Esophagus muscularis mucosa (tissue), 4 donors: ENCODE measurements at regions of chr5 and their contacts with region 1.

Region 1: DNA sequence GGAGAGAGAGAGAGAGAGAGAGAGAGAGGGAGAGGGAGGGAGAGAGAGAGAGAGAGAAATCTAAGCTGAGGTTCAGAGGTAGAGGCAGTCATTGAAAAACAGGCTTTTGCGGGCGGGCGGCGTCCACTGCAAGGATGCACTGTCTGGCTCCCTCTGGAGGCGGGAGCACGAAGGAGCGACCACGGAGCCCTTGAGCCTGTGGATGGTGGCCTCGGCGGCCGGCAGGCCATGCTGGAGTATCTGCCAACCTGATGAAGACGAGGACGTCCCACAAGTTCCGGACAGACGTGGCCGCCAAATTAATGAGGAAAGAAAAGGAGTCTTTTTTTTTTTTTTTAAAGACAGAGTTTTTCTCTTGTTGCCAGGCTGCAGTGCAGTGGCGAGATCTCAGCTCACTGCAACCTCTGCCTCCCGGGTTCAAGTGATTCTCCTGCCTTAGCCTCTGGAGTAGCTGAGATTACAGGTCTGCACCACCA is 2.2 kb upstream of the CCDC125 start:
- DNase-seq: peak; percentile 93
- H3K4me3 ChIP-seq: peak overlapping the region in 3 of 4 donors; percentile 18 to 24 (median 24)
- H3K27ac ChIP-seq: peak overlapping the region in 3 of 4 donors; percentile 35 to 48 (median 39)
- H3K4me1 ChIP-seq: peaks cover 15 to 26% (median 21%) of the 10 kb centered on the region in 4 donors
- H3K27me3 ChIP-seq: no peaks in the 10 kb centered on the region
- CTCF ChIP-seq: peak; percentile 60 to 86 (median 71)
- EP300 ChIP-seq: no peak
- POLR2A ChIP-seq: no peak

Region 2: GRCh38 chr5:69042915-69043658 is 291.7 kb before region 1 on chr5:
- intact Hi-C with region 1: loop called (anchors 5 kb)
- DNase-seq: peak; percentile 93
- H3K4me3 ChIP-seq: peak overlapping the region; percentile 53 to 61 (median 56)
- H3K27ac ChIP-seq: peak overlapping the region; percentile 42 to 80 (median 72)
- H3K4me1 ChIP-seq: peaks cover 0 to 15% (median 4%) of the 10 kb centered on the region in 4 donors
- H3K27me3 ChIP-seq: no peaks in the 10 kb centered on the region
- CTCF ChIP-seq: peak; percentile 88
- EP300 ChIP-seq: no peak
- POLR2A ChIP-seq: no peak

Region 3: GRCh38 chr5:69093771-69094482 is 240.9 kb before region 1 on chr5 and contains the start of gene SLC30A5:
- intact Hi-C with region 1: loop called (anchors 5 kb)
- DNase-seq: peak; percentile 99
- H3K4me3 ChIP-seq: peak within 1 kb of the TSS; percentile 72 to 95 (median 86)
- H3K27ac ChIP-seq: peak within 1 kb of the TSS; percentile 94 to 97 (median 96)
- H3K4me1 ChIP-seq: peaks cover 13 to 30% (median 27%) of the 10 kb centered on the region in 4 donors
- H3K27me3 ChIP-seq: no peaks in the 10 kb centered on the region
- CTCF ChIP-seq: peak; percentile 90 to 96 (median 91)
- EP300 ChIP-seq: no peak
- POLR2A ChIP-seq: no peak
- total RNA-seq, gene SLC30A5: 29.2 to 35.1 (median 32.5) TPM

Region 4: DNA sequence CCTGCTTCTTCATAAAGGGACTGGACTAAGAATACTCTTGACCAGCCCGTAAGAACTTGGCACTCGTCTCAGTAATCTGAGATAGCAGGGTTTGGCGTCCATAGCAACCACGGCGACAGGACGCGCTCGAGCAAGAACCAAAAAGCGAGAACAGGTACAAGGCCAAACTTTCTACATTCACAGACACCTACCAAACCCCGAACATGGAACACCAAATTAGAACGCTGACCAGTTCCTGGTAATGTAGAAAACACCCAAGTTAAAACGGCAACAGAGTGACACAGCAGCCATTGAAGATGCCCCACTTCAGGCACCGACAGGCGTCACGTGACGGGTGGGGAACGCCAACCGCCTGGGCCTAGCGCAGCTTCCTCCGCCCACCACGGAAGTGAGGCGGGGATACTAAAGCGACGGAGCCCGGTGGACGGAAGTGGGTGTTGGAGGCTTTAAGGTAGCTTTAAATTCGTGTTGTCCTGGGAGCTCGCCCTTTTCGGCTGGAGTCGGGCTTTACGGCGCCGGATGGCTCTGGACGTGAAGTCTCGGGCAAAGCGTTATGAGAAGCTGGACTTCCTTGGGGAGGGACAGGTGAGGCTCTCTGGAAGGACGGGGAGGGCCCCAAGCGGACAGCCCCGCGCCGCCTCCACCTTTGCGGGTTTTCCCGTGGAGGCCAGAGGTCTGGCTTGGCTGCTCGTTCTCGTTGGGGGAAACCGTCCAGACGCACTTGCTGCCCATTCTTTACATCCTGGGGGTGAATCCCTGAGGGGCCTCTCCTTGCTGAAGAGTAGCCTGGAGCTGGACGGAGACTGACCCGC is 100.2 kb before region 1 on chr5 and contains the start of gene CDK7:
- intact Hi-C with region 1: loop called (anchors 10 kb)
- DNase-seq: peak; percentile 98
- H3K4me3 ChIP-seq: peak within 1 kb of the TSS; percentile 70 to 96 (median 76)
- H3K27ac ChIP-seq: peak within 1 kb of the TSS; percentile 77 to 88 (median 84)
- H3K4me1 ChIP-seq: peaks cover 15 to 48% (median 41%) of the 10 kb centered on the region in 4 donors
- H3K27me3 ChIP-seq: no peaks in the 10 kb centered on the region
- CTCF ChIP-seq: peak in 1 of 3 experiments; percentile 12
- EP300 ChIP-seq: no peak
- POLR2A ChIP-seq: no peak
- total RNA-seq, gene CDK7: 16.1 to 27.4 (median 23.5) TPM

Region 5: GRCh38 chr5:69285448-69286116 is 49.2 kb before region 1 on chr5:
- intact Hi-C with region 1: no loop called
- DNase-seq: no peak
- H3K4me3 ChIP-seq: no peak overlapping the region
- H3K27ac ChIP-seq: no peak overlapping the region
- H3K4me1 ChIP-seq: no peaks in the 10 kb centered on the region
- H3K27me3 ChIP-seq: no peaks in the 10 kb centered on the region
- CTCF ChIP-seq: no peak
- EP300 ChIP-seq: no peak
- POLR2A ChIP-seq: no peak